ENCODE measurements at regions of chr15 and their contacts with region 1.

Region 1: GRCh38 chr15:40893733-40894688 is at the start of gene VPS18:
- DNase-seq: peak; percentile 99
- ATAC-seq: peak; percentile 96 to 99 (median 97)
- H3K4me3 ChIP-seq: peak within 1 kb of the TSS; percentile 73
- H3K4me3 Mint-ChIP-seq: peak within 1 kb of the TSS; percentile 100
- H3K27ac ChIP-seq: peak within 1 kb of the TSS; percentile 81
- H3K27ac Mint-ChIP-seq: peak within 1 kb of the TSS; percentile 98
- H3K4me1 ChIP-seq: peaks cover 30% of the 10 kb centered on the region
- H3K4me1 Mint-ChIP-seq: peaks cover 37 to 44% of the 10 kb centered on the region in 2 donors
- H3K27me3 ChIP-seq: no peaks in the 10 kb centered on the region
- H3K27me3 Mint-ChIP-seq: peaks cover 0 to 5% of the 10 kb centered on the region in 2 donors
- CTCF ChIP-seq: peak; percentile 91
- total RNA-seq, gene VPS18: 30.8 to 35.6 (median 34.1) TPM

Region 2: DNA sequence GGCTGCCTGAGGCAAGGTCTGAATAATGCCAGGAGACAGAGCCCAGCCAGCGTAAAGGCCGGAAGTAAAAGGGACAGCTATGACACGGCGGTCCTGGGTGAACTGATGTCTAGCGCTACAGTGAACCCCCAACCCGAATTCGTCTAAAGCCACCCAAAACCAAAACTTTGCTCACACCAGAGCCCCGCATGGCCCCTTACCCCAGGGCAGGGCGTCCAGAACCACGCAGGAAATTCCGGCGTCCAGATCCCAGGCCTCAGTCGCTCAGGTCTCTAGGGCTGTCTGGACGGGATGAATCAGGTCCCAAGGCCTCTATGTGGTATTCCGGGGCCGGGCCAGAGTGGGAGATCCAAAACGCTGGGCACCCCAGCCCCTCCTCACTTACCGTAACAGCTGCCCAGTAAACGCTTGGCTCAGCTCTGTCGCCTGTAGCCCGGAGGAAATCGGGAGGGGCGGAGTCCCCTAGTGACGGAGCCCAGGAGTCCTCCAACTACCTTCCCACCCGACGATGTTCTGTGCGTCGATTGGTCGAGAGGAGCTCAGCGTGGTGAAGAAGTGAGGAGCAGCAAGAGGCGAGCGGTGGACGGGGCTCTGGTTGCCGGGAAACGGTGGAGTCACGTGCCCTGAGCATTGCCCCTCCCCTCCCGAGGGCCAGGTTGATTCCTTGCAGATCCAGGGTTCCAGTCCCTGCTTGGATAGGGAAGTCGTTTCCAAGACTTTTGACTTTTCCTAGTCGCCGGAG is 329.2 kb before region 1 on chr15 and contains the start of gene CCDC32:
- intact Hi-C with region 1: loop called (anchors 10 kb)
- DNase-seq: peak; percentile 87 to 98
- ATAC-seq: peak; percentile 88 to 97 (median 92)
- H3K4me3 ChIP-seq: peak within 1 kb of the TSS; percentile 92
- H3K4me3 Mint-ChIP-seq: peak within 1 kb of the TSS; percentile 95
- H3K27ac ChIP-seq: peak within 1 kb of the TSS; percentile 92
- H3K27ac Mint-ChIP-seq: peak within 1 kb of the TSS; percentile 94 to 95
- H3K4me1 ChIP-seq: peaks cover 19% of the 10 kb centered on the region
- H3K4me1 Mint-ChIP-seq: peaks cover 34 to 43% of the 10 kb centered on the region in 2 donors
- H3K27me3 ChIP-seq: no peaks in the 10 kb centered on the region
- H3K27me3 Mint-ChIP-seq: no peaks in the 10 kb centered on the region
- CTCF ChIP-seq: no peak
- total RNA-seq, gene CCDC32: 34.2 to 43.7 (median 37.4) TPM

Region 3: DNA sequence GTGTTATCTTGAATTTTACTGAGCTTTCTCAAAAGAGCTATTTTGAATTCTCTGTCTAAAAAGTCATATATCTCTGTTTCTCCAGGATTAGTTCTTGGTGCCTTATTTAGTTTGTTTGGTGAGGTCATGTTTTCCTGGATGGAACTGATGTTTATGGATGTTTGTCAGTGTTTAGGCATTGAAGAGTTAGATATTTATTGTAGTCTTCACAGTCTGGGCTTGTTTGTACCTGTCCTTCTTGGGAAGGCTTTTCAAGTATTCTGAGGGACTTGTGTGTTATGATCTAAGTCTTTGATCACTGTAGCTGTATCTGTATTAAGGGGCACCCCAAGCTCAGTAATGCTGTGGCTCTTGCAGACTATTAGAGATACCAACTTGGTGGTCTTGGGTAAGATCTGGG is 209.6 kb before region 1 on chr15:
- intact Hi-C with region 1: loop called (anchors 5 kb)
- DNase-seq: no peak
- ATAC-seq: no peak
- H3K4me3 ChIP-seq: no peak overlapping the region
- H3K4me3 Mint-ChIP-seq: no peak overlapping the region
- H3K27ac ChIP-seq: no peak overlapping the region
- H3K27ac Mint-ChIP-seq: no peak overlapping the region
- H3K4me1 ChIP-seq: no peaks in the 10 kb centered on the region
- H3K4me1 Mint-ChIP-seq: no peaks in the 10 kb centered on the region
- H3K27me3 ChIP-seq: no peaks in the 10 kb centered on the region
- H3K27me3 Mint-ChIP-seq: no peaks in the 10 kb centered on the region
- CTCF ChIP-seq: no peak

Region 4: DNA sequence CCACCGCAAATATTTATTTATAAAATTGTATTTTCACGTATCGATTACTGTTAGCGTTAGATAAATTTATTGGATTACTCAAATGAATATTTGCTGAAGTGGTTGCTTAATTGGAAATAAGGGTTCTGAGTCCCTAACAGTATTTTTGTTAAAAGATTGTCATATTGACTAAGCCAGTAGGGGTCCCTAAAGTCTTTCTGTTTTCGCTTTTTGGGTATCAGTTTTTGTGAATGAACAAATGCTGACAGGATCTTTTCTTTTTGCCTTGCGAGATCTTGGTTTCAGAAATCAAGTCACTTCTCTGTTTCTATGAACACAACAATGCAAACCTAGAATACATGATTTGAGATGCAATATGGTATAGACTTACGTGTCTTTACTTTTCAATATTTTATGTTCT is 191.9 kb before region 1 on chr15:
- intact Hi-C with region 1: loop called (anchors 1 kb)
- DNase-seq: peak in 1 of 2 donors; percentile 54
- ATAC-seq: peak in 2 of 3 donors; percentile 61 to 68
- H3K4me3 ChIP-seq: no peak overlapping the region
- H3K4me3 Mint-ChIP-seq: no peak overlapping the region
- H3K27ac ChIP-seq: no peak overlapping the region
- H3K27ac Mint-ChIP-seq: no peak overlapping the region
- H3K4me1 ChIP-seq: no peaks in the 10 kb centered on the region
- H3K4me1 Mint-ChIP-seq: no peaks in the 10 kb centered on the region
- H3K27me3 ChIP-seq: no peaks in the 10 kb centered on the region
- H3K27me3 Mint-ChIP-seq: no peaks in the 10 kb centered on the region
- CTCF ChIP-seq: peak; percentile 55

Region 5: DNA sequence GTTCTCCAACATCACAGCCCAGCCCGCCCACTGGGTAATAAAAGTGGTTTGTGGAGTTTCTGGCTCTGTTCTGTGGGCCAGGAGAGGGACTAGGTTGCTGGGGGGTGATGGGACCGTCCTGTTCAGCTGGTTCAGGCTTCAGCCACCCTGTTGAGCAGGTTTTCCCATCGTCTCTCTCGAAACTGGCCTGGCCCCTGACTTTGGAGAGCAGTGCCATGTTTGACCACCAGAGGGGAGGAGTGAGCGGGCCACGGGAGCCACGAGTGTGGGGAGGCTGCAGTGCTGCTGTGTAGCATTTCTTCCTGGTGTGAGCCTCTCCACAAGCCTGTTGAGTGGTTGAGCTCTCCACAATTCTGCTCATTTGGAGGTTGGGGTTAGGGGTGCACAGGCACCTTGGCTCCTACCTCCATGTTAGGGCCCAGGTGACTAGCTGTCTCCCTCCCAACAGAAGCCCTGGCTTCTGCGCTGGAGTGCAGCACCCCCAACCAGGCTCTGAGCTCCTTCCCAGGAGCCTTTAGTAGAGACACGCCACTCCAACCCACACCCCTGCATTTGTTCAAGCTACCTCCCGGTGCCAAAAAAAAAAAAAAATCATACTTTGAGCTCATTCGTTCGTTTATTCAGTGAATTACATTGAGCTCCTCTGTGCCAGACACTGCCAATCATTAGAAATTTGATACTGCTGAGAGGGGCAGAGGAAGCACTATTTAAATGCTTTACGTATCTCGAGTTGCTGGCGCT is 36.2 kb before region 1 on chr15:
- intact Hi-C with region 1: loop called (anchors 1 kb)
- DNase-seq: peak; percentile 76 to 87
- ATAC-seq: peak; percentile 91 to 99 (median 94)
- H3K4me3 ChIP-seq: no peak overlapping the region
- H3K4me3 Mint-ChIP-seq: no peak overlapping the region
- H3K27ac ChIP-seq: no peak overlapping the region
- H3K27ac Mint-ChIP-seq: peak overlapping the region in 1 of 2 donors; percentile 44
- H3K4me1 ChIP-seq: peaks cover 18% of the 10 kb centered on the region
- H3K4me1 Mint-ChIP-seq: peaks cover 0 to 6% of the 10 kb centered on the region in 2 donors
- H3K27me3 ChIP-seq: no peaks in the 10 kb centered on the region
- H3K27me3 Mint-ChIP-seq: peaks cover 11 to 15% of the 10 kb centered on the region in 2 donors
- CTCF ChIP-seq: peak; percentile 84